ENCODE measurements at regions of chr6 and their contacts with region 1.

Region 1: DNA sequence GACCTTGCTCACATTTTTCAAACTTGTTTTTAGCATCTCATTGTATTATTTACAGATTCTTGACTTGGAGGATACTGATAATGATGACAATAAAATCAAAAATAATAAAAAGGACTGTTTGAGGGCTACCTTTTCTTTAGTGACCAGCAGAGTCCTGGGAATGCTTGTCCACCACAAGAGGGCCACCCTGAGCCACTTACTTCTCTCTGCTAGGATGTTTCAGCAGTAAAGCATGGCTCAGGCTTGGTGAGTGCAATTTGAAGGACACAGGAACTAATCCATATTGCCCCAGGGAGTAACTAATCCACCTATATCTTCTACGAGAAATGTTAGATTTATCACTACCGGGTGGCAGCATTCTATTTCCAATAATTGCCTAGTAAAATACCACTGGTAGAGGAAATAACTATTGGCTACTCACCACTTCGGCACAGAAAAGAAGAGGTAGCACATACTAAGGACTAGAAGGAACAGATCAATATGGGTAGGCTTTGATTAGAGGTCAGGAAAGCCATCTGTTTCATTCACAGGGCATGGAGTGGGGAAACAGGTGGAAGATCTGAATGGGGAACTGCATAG is 5.8 kb upstream of the KIAA0408 start:
- DNase-seq: peak; percentile 28
- ATAC-seq: peak; percentile 99
- H3K4me3 ChIP-seq: no peak overlapping the region
- H3K27ac ChIP-seq: no peak overlapping the region
- H3K4me1 ChIP-seq: no peaks in the 10 kb centered on the region
- H3K27me3 ChIP-seq: no peaks in the 10 kb centered on the region
- CTCF ChIP-seq: peak; percentile 82 to 96 (median 91)
- POLR2A ChIP-seq: no peak
- RAD21 ChIP-seq: peak; percentile 77

Region 2: GRCh38 chr6:127186889-127187288 is 278.1 kb before region 1 on chr6:
- CTCF ChIA-PET with region 1: no interaction called
- POLR2A ChIA-PET with region 1: no interaction called
- RAD21 ChIA-PET with region 1: no interaction called
- intact Hi-C with region 1: no loop called
- DNase-seq: peak; percentile 37
- ATAC-seq: peak; percentile 88
- H3K4me3 ChIP-seq: no peak overlapping the region
- H3K27ac ChIP-seq: no peak overlapping the region
- H3K4me1 ChIP-seq: no peaks in the 10 kb centered on the region
- H3K27me3 ChIP-seq: no peaks in the 10 kb centered on the region
- CTCF ChIP-seq: peak; percentile 40 to 80 (median 73); a peak in 5 of 6 replicates
- POLR2A ChIP-seq: no peak
- RAD21 ChIP-seq: peak; percentile 57

Region 3: DNA sequence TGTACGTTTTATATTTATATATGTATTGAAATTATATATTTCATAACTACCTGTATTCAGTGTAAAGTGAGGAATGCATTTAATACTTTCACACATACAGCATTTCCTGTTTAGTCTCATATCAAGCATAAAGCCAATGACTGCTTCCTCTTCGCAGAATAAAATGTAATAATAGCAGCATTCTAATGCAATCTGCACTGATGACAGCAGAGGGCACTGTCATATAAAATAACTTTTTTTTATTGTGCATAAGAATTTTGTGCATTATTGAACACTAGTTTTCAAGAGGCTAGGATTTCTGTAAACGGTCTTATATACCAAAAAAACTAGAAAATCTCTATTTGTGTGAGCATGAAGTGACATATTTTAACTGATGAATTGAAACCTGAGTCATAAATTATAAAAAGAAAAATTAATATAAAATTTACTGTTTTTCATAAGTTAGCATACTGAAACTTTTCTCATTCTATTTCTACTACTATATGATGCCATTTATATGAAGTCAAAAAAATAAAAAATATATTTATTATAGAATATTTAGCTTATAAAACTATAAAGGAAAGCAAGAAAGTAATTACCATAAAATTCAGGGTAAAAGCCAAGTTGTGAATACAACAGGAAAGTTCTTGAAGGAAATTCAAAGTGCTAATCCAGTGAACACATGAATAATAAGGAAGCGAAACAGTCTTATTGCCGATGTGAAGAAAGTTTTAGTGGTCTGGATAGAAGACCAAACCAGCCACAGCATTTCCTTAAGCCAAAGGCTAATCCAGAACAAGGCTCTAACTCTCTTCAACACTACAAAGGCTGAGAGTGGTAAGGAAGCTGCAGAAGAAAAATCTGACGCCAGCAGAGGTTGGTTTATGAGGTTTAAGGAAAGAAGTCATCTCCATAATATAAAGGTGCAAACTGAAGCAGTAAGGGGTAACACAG is 162.0 kb before region 1 on chr6:
- CTCF ChIA-PET with region 1: interaction called, 5 read pairs
- POLR2A ChIA-PET with region 1: no interaction called
- RAD21 ChIA-PET with region 1: no interaction called
- intact Hi-C with region 1: loop called (anchors 1 kb)
- DNase-seq: peak; percentile 16
- ATAC-seq: peak; percentile 49; the same call in 1 of the 2 replicates
- H3K4me3 ChIP-seq: no peak overlapping the region
- H3K27ac ChIP-seq: no peak overlapping the region
- H3K4me1 ChIP-seq: no peaks in the 10 kb centered on the region
- H3K27me3 ChIP-seq: no peaks in the 10 kb centered on the region
- CTCF ChIP-seq: peak; percentile 51 to 76 (median 73); a peak in 5 of 6 replicates
- POLR2A ChIP-seq: no peak
- RAD21 ChIP-seq: peak; percentile 76

Region 4: DNA sequence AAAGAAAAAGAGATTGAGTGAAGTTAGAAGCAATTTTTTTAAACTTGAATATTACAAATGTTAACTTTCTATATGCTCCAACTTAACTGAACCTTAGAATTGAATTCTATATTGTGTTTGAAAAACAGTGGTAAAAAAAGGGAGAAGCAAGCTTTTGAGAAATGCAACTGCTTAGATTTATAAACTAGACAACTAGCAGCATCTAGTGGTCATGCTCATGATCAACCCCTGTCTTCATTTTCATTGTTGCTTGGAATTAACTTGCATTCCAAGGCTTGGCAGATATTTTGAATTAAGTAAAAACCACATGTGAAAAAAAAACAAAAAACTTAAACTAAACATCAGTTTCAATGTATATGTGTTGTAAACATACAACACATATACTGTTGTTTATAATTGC is 225.1 kb after region 1 on chr6:
- CTCF ChIA-PET with region 1: interaction called, 7 read pairs
- POLR2A ChIA-PET with region 1: no interaction called
- RAD21 ChIA-PET with region 1: no interaction called
- intact Hi-C with region 1: loop called (anchors 5 kb)
- DNase-seq: peak; percentile 27
- ATAC-seq: no peak
- H3K4me3 ChIP-seq: no peak overlapping the region
- H3K27ac ChIP-seq: no peak overlapping the region
- H3K4me1 ChIP-seq: no peaks in the 10 kb centered on the region
- H3K27me3 ChIP-seq: no peaks in the 10 kb centered on the region
- CTCF ChIP-seq: peak; percentile 64 to 75 (median 71)
- POLR2A ChIP-seq: no peak
- RAD21 ChIP-seq: peak; percentile 81

Region 5: GRCh38 chr6:128379577-128379976 is 914.6 kb after region 1 on chr6:
- CTCF ChIA-PET with region 1: no interaction called
- POLR2A ChIA-PET with region 1: no interaction called
- RAD21 ChIA-PET with region 1: no interaction called
- intact Hi-C with region 1: no loop called
- DNase-seq: no peak
- ATAC-seq: no peak
- H3K4me3 ChIP-seq: no peak overlapping the region
- H3K27ac ChIP-seq: no peak overlapping the region
- H3K4me1 ChIP-seq: no peaks in the 10 kb centered on the region
- H3K27me3 ChIP-seq: no peaks in the 10 kb centered on the region
- CTCF ChIP-seq: no peak
- POLR2A ChIP-seq: no peak
- RAD21 ChIP-seq: no peak